Panc1 (cell line): ENCODE measurements at regions of chr2 and their contacts with region 1.

Region 1: GRCh38 chr2:214960677-214961076 is 151.2 kb upstream of the BARD1 start:
- DNase-seq: no peak
- ATAC-seq: no peak
- H3K4me3 ChIP-seq: no peak overlapping the region
- H3K27ac ChIP-seq: no peak overlapping the region
- H3K4me1 ChIP-seq: no peaks in the 10 kb centered on the region
- H3K27me3 ChIP-seq: no peaks in the 10 kb centered on the region
- CTCF ChIP-seq: no peak

Region 2: GRCh38 chr2:215347878-215348277 is 387.2 kb after region 1 on chr2:
- CTCF ChIA-PET with region 1: no interaction called
- POLR2A ChIA-PET with region 1: interaction called, 13 read pairs
- in situ Hi-C with region 1: no loop called
- intact Hi-C with region 1: no loop called
- DNase-seq: no peak
- ATAC-seq: no peak
- H3K4me3 ChIP-seq: no peak overlapping the region
- H3K27ac ChIP-seq: no peak overlapping the region
- H3K4me1 ChIP-seq: no peaks in the 10 kb centered on the region
- H3K27me3 ChIP-seq: no peaks in the 10 kb centered on the region
- CTCF ChIP-seq: no peak